ENCODE measurements at regions of chr13 and their contacts with region 1.

Region 1: GRCh38 chr13:102800145-102801041 is 1.5 kb downstream of the BIVM start:
- DNase-seq: peak; percentile 90
- ATAC-seq: peak; percentile 79
- H3K4me3 Mint-ChIP-seq: peak overlapping the region; percentile 87
- H3K27ac Mint-ChIP-seq: peak overlapping the region; percentile 87
- H3K4me1 Mint-ChIP-seq: peaks cover 40% of the 10 kb centered on the region
- H3K27me3 Mint-ChIP-seq: no peaks in the 10 kb centered on the region

Region 2: GRCh38 chr13:102580552-102581169 is 219.7 kb before region 1 on chr13:
- CTCF ChIA-PET with region 1: interaction called, 14 read pairs
- POLR2A ChIA-PET with region 1: interaction called, 4 read pairs
- DNase-seq: peak; percentile 66
- ATAC-seq: peak; percentile 81
- H3K4me3 Mint-ChIP-seq: no peak overlapping the region
- H3K27ac Mint-ChIP-seq: no peak overlapping the region
- H3K4me1 Mint-ChIP-seq: peaks cover 21% of the 10 kb centered on the region
- H3K27me3 Mint-ChIP-seq: peaks cover 8% of the 10 kb centered on the region

Region 3: DNA sequence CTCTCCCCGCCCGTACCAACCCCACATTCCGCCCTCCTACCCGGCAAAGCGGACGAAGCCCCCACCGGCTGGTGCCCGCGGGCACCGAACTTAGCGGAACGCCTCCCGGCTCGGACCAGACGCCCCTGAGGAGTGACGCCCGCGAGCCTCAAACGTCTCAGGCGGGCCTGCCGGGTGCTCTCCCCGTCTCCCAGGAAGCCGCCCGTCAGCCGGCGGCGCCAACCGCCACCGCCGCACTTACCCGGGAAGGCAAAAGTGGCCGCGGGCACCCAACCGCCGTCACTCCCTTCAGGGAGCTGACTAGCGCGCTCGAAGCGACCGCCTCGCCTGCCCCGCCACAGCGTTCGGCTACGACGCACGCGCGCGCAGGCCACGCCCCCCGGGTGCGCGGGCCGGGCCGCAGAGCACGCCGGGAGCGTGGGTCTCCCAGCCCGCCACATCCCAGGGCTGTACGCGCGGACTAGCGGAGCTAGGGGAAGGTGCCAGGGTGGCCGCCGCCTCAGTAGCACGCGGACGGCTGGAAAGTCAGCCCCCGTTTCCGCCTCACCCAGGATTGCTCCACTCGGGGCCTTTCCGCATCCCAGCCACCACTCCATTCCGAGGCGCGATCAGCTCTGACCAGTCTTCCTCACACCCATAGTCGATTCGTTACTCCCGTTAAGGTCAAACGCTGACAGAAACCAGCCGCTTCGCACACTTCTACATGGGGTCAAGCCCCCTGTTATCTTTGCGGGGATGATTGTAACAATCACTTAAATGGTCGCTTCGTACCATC is 26.8 kb before region 1 on chr13 and contains the start of gene TEX30:
- CTCF ChIA-PET with region 1: interaction called, 32 read pairs
- POLR2A ChIA-PET with region 1: interaction called, 62 read pairs
- DNase-seq: peak; percentile 89
- ATAC-seq: peak; percentile 96
- H3K4me3 Mint-ChIP-seq: peak within 1 kb of the TSS; percentile 84
- H3K27ac Mint-ChIP-seq: peak within 1 kb of the TSS; percentile 92
- H3K4me1 Mint-ChIP-seq: peaks cover 63% of the 10 kb centered on the region
- H3K27me3 Mint-ChIP-seq: no peaks in the 10 kb centered on the region
- total RNA-seq, gene TEX30: 40.1 to 43.3 TPM

Region 4: GRCh38 chr13:102779436-102780159 is 20.8 kb before region 1 on chr13:
- CTCF ChIA-PET with region 1: interaction called, 32 read pairs
- POLR2A ChIA-PET with region 1: interaction called, 62 read pairs
- DNase-seq: peak; percentile 51
- ATAC-seq: peak; percentile 81
- H3K4me3 Mint-ChIP-seq: peak overlapping the region; percentile 67
- H3K27ac Mint-ChIP-seq: peak overlapping the region; percentile 99
- H3K4me1 Mint-ChIP-seq: peaks cover 53% of the 10 kb centered on the region
- H3K27me3 Mint-ChIP-seq: no peaks in the 10 kb centered on the region